PC-3 (cell line): ENCODE measurements at regions of chr11 and their contacts with region 1.

Region 1: DNA sequence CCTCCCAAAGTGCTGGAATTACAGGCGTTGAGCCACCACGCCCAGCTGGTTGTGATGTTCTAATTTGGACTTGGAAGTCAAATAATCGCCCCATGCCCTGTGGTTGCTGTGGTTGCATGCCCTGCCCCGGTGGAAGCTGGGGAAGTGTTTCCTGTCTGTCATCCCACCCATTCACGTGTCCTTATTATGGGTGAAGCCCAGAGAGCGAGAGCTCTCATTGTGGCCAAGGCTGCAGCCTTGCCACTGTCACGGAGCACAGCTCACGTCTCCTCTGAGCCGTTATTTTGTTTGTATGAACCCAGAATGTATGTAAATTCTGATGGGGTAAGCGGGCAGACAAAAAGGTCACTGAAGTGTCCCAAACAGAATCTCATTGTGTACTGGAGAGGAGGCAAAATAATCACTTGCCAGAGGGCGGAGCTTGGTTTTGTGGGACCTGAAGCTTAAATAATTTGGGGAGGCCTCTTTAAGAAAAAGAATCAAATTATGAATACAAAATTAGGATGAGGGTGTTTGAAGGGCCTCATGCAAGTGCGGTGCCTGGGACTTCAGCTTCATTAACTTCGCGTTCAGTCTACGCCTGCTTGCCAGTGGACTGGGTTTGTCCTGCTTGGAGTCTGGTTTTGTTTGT is 25.8 kb upstream of the TREH start:
- DNase-seq: no peak
- ATAC-seq: no peak
- H3K4me3 ChIP-seq: no peak overlapping the region
- H3K27ac ChIP-seq: no peak overlapping the region
- H3K4me1 ChIP-seq: no peaks in the 10 kb centered on the region
- H3K27me3 ChIP-seq: peaks cover 5% of the 10 kb centered on the region; the same call in 1 of the 2 replicates
- CTCF ChIP-seq: no peak

Region 2: DNA sequence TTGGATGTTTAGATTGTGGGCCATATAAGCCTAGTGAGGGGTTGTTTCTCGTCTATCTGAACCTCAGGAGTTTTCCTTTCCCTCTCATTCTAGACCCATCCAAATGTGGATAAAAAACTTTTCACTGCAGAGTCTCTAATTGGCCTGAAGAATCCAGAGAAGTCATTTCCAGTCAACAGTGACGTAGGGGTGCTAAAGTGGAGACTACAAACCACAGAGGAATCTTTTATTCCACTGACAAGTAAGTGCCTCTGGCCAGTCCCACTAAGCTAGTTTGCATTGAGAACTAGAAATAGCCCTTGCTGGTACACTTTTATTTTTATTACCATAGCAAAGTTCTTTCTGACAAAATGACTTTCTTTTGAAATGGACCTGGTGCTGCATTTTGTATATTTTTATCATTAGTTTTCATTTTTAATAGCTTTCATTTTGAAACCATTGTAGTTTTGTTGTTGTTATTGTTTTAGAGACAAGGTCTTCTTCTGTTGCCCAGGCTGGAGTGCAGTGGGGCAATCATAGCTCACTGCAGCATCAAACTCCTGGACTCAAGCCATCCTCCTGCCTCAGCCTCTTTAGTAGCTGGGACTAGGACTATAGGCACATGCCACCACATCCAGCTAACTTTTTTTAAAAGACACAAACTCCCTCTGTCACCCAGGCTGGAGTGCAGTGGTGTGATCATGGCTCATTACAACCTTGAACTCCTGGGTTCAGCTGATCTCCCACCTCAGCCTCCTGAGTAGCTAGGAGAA is 112.4 kb before region 1 on chr11:
- CTCF ChIA-PET with region 1: interaction called, 11 read pairs
- POLR2A ChIA-PET with region 1: no interaction called
- intact Hi-C with region 1: no loop called
- DNase-seq: no peak
- ATAC-seq: no peak
- H3K4me3 ChIP-seq: no peak overlapping the region
- H3K27ac ChIP-seq: no peak overlapping the region
- H3K4me1 ChIP-seq: no peaks in the 10 kb centered on the region
- H3K27me3 ChIP-seq: no peaks in the 10 kb centered on the region
- CTCF ChIP-seq: no peak

Region 3: GRCh38 chr11:118870396-118871345 is 165.4 kb after region 1 on chr11:
- CTCF ChIA-PET with region 1: no interaction called
- POLR2A ChIA-PET with region 1: no interaction called
- intact Hi-C with region 1: no loop called
- DNase-seq: no peak
- ATAC-seq: peak; percentile 64
- H3K4me3 ChIP-seq: peak overlapping the region; percentile 27; the same call in 1 of the 2 replicates
- H3K27ac ChIP-seq: peak overlapping the region; percentile 21; the same call in 1 of the 2 replicates
- H3K4me1 ChIP-seq: peaks cover 12% of the 10 kb centered on the region
- H3K27me3 ChIP-seq: no peaks in the 10 kb centered on the region
- CTCF ChIP-seq: 0 out of 2 replicates have a peak, but pooled peaks have one; percentile 12